Esophagus muscularis mucosa (tissue), 4 donors: ENCODE measurements at regions of chr19 and their contacts with region 1.

Region 1: DNA sequence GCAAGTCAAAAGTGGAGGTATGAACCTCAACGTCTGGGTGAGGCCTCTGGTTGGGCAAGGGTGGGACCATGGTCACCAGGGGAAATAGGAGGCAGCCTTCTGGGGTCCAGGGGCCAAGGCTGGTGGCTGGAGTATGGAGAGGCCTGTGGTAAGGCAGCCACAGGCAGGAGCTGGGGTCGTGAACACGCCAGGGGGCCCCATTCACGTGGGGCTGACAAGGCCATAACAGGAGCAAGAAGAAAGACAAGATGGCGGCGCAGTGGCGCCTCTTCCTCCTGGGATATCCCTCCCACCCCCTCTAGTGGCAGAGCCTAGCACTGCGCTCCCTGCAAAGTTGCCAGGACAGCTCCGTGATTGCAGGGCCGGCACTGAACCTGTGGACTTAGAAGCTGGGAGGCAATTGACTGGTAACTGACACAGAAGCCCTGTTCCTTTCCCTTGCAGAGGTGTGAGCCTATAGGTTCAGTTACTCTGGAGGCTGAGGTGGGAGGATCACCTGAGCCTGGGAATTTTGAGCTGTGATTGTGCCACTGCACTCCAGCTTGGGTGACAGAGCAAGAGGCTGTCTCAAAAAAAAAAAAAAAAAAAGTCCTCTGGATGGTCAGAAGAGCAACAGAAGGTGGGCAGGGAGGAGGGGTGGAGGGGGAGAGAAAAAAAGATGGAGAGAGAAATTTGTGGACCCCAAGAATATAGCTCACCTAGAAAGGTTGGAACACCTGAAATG is 19.7 kb upstream of the EDDM13 start:
- DNase-seq: peak; percentile 92
- H3K4me3 ChIP-seq: no peak overlapping the region
- H3K27ac ChIP-seq: no peak overlapping the region
- H3K4me1 ChIP-seq: peaks cover 0 to 4% (median 0%) of the 10 kb centered on the region in 4 donors
- H3K27me3 ChIP-seq: peaks cover 0 to 18% (median under 1%) of the 10 kb centered on the region in 4 donors
- CTCF ChIP-seq: peak; percentile 68 to 94 (median 73)
- EP300 ChIP-seq: no peak
- POLR2A ChIP-seq: no peak

Region 2: GRCh38 chr19:56350416-56351045 is 97.7 kb after region 1 on chr19:
- intact Hi-C with region 1: loop called (anchors 5 kb)
- DNase-seq: no peak
- H3K4me3 ChIP-seq: no peak overlapping the region
- H3K27ac ChIP-seq: no peak overlapping the region
- H3K4me1 ChIP-seq: no peaks in the 10 kb centered on the region
- H3K27me3 ChIP-seq: no peaks in the 10 kb centered on the region
- CTCF ChIP-seq: peak; percentile 83 to 89 (median 88)
- EP300 ChIP-seq: no peak
- POLR2A ChIP-seq: no peak